WTC11 (cell line): ENCODE measurements at regions of chr15 and their contacts with region 1.

Region 1: DNA sequence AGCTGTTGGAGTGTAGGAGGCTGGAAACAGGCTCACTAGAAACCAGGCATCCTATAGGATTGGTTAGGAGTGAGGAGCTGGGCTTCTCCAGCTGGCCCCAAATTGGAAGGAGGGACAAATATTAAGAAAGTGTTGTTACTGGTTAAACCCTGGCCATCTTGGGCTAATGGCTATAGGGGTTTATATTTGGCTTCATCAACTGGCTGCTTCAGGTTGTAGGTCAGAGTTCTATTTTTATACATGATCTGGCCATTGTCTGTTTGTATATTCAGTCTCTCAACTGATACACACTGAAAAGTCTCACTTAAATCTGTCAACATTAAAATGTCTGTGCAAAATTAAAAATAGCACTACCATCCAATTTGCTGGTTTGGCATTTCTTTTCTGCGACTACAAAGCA is 70.2 kb upstream of the ARRDC4 start:
- DNase-seq: no peak
- ATAC-seq: no peak
- H3K4me3 Mint-ChIP-seq: no peak overlapping the region
- H3K27ac Mint-ChIP-seq: no peak overlapping the region
- H3K4me1 Mint-ChIP-seq: no peaks in the 10 kb centered on the region
- H3K27me3 Mint-ChIP-seq: no peaks in the 10 kb centered on the region
- CTCF ChIP-seq: no peak

Region 2: GRCh38 chr15:97903971-97904572 is 13.8 kb after region 1 on chr15:
- CTCF ChIA-PET with region 1: interaction called, 14 read pairs
- POLR2A ChIA-PET with region 1: no interaction called
- DNase-seq: peak; percentile 86
- ATAC-seq: peak; percentile 99
- H3K4me3 Mint-ChIP-seq: peak overlapping the region; percentile 33; the same call in 1 of the 2 replicates
- H3K27ac Mint-ChIP-seq: no peak overlapping the region
- H3K4me1 Mint-ChIP-seq: peaks cover 4% of the 10 kb centered on the region
- H3K27me3 Mint-ChIP-seq: peaks cover 2% of the 10 kb centered on the region
- CTCF ChIP-seq: no peak